Activated CD8-positive, alpha-beta T cell treated with anti-CD3 and anti-CD28 coated beads for 36 hours (primary cell): ENCODE measurements at regions of chr3 and their contacts with region 1.

Region 1: GRCh38 chr3:69324362-69325025 is 61.4 kb downstream of the FRMD4B start:
- DNase-seq: peak; percentile 37
- ATAC-seq: peak; percentile 43
- H3K4me3 Mint-ChIP-seq: no peak overlapping the region
- H3K27ac Mint-ChIP-seq: peak overlapping the region; percentile 43
- H3K4me1 Mint-ChIP-seq: peaks cover 50% of the 10 kb centered on the region
- H3K27me3 Mint-ChIP-seq: no peaks in the 10 kb centered on the region
- CTCF ChIP-seq: peak; percentile 31

Region 2: DNA sequence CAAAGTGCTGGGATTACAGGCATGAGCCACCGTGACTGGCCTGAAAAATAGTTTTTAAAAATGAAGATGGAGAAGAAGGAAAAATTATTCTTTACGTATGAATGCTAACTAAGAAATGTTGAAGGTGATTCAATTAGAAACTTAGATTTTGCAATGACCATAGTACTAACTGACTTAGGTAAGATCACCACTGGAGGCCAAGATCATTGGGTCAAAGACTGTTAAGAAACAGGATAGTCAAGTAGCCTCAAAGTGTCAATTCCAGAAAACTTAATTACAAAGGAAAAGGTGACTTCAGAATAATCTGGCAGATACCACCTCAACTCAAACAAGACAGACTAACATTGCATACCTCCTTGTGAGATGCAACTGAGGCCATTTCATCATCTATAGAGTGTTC is 57.9 kb before region 1 on chr3:
- CTCF ChIA-PET with region 1: no interaction called
- POLR2A ChIA-PET with region 1: no interaction called
- intact Hi-C with region 1: no loop called
- DNase-seq: no peak
- ATAC-seq: no peak
- H3K4me3 Mint-ChIP-seq: no peak overlapping the region
- H3K27ac Mint-ChIP-seq: no peak overlapping the region
- H3K4me1 Mint-ChIP-seq: no peaks in the 10 kb centered on the region
- H3K27me3 Mint-ChIP-seq: no peaks in the 10 kb centered on the region
- CTCF ChIP-seq: no peak

Region 3: GRCh38 chr3:69425261-69425660 is 100.8 kb after region 1 on chr3:
- CTCF ChIA-PET with region 1: interaction called, 4 read pairs
- POLR2A ChIA-PET with region 1: no interaction called
- intact Hi-C with region 1: loop called (anchors 5 kb)
- DNase-seq: peak; percentile 54
- ATAC-seq: peak; percentile 65
- H3K4me3 Mint-ChIP-seq: no peak overlapping the region
- H3K27ac Mint-ChIP-seq: no peak overlapping the region
- H3K4me1 Mint-ChIP-seq: peaks cover 2% of the 10 kb centered on the region
- H3K27me3 Mint-ChIP-seq: peaks cover 2% of the 10 kb centered on the region
- CTCF ChIP-seq: peak; percentile 24

Region 4: GRCh38 chr3:69659180-69659910 is 334.9 kb after region 1 on chr3:
- CTCF ChIA-PET with region 1: no interaction called
- POLR2A ChIA-PET with region 1: no interaction called
- intact Hi-C with region 1: no loop called
- DNase-seq: no peak
- ATAC-seq: no peak
- H3K4me3 Mint-ChIP-seq: no peak overlapping the region
- H3K27ac Mint-ChIP-seq: no peak overlapping the region
- H3K4me1 Mint-ChIP-seq: no peaks in the 10 kb centered on the region
- H3K27me3 Mint-ChIP-seq: peaks cover 2% of the 10 kb centered on the region
- CTCF ChIP-seq: no peak

Region 5: DNA sequence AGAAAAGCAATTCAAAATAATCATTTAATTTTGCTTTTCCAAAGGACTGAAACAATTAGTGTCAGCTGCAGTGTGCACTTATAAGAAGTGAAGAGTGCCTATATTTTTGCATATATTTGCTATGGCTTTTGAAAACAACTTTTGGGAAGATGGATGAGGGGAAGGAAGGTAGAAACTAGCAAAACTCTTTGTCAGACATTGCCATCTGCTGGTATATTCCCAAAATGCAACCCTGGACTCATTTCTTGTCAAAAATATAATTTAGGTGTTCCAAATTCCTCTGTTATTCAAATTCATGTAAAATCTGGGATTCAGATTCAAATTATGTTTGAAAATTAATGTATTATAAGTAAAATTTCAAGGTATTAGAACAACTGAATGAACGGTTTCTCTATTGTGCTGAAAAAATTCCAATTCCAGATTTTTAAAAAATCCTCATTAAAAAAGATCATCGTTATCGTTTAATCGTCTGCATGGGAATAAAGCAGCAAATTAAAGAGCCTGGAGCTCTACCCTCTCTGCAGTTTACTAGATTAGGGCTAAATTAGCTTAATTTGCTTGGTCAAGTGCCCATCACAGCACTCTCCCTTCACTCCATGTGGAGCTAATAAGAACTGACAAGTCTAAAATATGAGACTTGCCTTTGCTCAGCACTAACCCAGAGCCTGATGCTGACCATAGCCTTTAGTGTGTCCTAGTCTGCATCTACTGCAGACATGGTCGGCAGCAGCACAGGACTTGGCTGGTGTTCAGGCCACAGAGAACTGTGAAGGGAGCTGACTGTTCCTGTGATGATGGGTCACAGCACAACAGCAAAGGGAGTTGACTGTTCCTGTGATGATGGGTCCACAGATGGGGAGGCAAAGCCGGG is 346.8 kb after region 1 on chr3:
- CTCF ChIA-PET with region 1: interaction called, 7 read pairs
- POLR2A ChIA-PET with region 1: no interaction called
- intact Hi-C with region 1: loop called (anchors 10 kb)
- DNase-seq: peak; percentile 4
- ATAC-seq: no peak
- H3K4me3 Mint-ChIP-seq: no peak overlapping the region
- H3K27ac Mint-ChIP-seq: no peak overlapping the region
- H3K4me1 Mint-ChIP-seq: no peaks in the 10 kb centered on the region
- H3K27me3 Mint-ChIP-seq: no peaks in the 10 kb centered on the region
- CTCF ChIP-seq: peak; percentile 73